ENCODE measurements at regions of chr6 and their contacts with region 1.

Region 1: GRCh38 chr6:26045065-26045927 is 41.9 kb upstream of the HFE start:
- DNase-seq: peak; percentile 92 to 96 (median 96)
- H3K4me3 ChIP-seq: peak overlapping the region; percentile 33 to 94 (median 79)
- H3K27ac ChIP-seq: peak overlapping the region; percentile 37 to 65
- H3K4me1 ChIP-seq: peaks cover 4 to 41% (median 27%) of the 10 kb centered on the region in 4 experiments
- H3K27me3 ChIP-seq: no peaks in the 10 kb centered on the region

Region 2: DNA sequence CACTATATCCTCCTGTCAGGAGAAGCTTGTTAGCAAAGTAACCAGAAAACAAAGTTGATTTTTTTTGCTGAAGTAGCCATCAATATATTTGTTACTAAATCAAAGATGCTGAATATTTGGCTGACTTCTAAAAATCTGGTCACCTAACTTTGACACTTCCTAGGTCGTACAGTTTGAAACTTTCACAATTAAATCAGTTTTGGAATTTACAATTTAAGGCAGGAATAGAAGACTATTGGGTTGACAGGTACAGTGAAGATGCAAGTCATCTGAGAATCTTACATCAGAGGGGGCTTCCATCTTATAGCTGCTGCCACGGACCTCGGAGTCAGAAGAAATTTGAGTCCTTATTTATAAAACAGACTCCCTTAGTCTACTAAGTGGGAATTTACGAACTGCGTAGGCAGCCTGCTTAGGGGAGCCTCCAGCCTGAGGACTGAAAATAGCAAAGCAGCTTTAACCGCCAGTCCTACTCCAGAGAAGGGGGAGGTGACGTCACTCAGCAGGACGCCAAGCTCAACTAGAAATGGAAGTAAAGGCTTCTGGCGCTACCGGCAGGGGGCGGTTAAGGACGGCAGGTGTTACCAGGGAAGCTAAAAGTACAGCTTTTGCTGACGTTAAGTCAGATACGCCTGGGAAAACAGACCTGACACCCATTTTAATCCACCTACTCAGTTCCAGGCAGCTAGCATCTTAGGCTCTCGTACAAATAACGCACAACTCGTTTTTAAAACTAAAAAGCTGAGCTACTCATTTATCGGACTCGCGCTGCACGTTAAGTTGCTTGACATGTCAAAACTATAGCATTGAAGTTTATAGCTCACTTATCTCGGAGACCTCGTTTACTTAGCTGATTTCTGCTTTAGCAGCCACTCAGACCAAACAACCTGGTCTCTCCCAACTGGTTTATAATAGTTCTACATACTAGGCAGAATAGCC is 19.1 kb before region 1 on chr6:
- CTCF ChIA-PET with region 1: interaction called, 53 read pairs
- POLR2A ChIA-PET with region 1: interaction called, 78 read pairs
- DNase-seq: peak; percentile 96 to 98 (median 97)
- H3K4me3 ChIP-seq: peak overlapping the region in 6 of 7 experiments; percentile 70 to 91 (median 85)
- H3K27ac ChIP-seq: peak overlapping the region; percentile 88 to 96
- H3K4me1 ChIP-seq: peaks cover 25 to 71% (median 41%) of the 10 kb centered on the region in 4 experiments
- H3K27me3 ChIP-seq: no peaks in the 10 kb centered on the region

Region 3: GRCh38 chr6:26031595-26032339 is 13.5 kb before region 1 on chr6:
- CTCF ChIA-PET with region 1: interaction called, 53 read pairs
- POLR2A ChIA-PET with region 1: interaction called, 78 read pairs
- DNase-seq: peak; percentile 95 to 97 (median 97)
- H3K4me3 ChIP-seq: peak overlapping the region; percentile 41 to 87 (median 80)
- H3K27ac ChIP-seq: peak overlapping the region; percentile 17 to 83
- H3K4me1 ChIP-seq: peaks cover 24 to 81% (median 42%) of the 10 kb centered on the region in 4 experiments
- H3K27me3 ChIP-seq: no peaks in the 10 kb centered on the region

Region 4: GRCh38 chr6:26065952-26066380 is 20.7 kb after region 1 on chr6:
- CTCF ChIA-PET with region 1: interaction called, 44 read pairs
- POLR2A ChIA-PET with region 1: no interaction called
- DNase-seq: peak; percentile 84 to 95 (median 93)
- H3K4me3 ChIP-seq: peak overlapping the region in 1 of 7 experiments; percentile 28
- H3K27ac ChIP-seq: no peak overlapping the region
- H3K4me1 ChIP-seq: peaks cover 0 to 7% (median 3%) of the 10 kb centered on the region in 4 experiments
- H3K27me3 ChIP-seq: no peaks in the 10 kb centered on the region

Region 5: GRCh38 chr6:26122793-26123674 is 77.7 kb after region 1 on chr6:
- CTCF ChIA-PET with region 1: interaction called, 10 read pairs
- POLR2A ChIA-PET with region 1: interaction called, 31 read pairs
- DNase-seq: peak; percentile 97 to 99 (median 98)
- H3K4me3 ChIP-seq: peak overlapping the region; percentile 56 to 100 (median 96)
- H3K27ac ChIP-seq: peak overlapping the region; percentile 84 to 96
- H3K4me1 ChIP-seq: peaks cover 11 to 38% (median 26%) of the 10 kb centered on the region in 4 experiments
- H3K27me3 ChIP-seq: no peaks in the 10 kb centered on the region

Region 6: DNA sequence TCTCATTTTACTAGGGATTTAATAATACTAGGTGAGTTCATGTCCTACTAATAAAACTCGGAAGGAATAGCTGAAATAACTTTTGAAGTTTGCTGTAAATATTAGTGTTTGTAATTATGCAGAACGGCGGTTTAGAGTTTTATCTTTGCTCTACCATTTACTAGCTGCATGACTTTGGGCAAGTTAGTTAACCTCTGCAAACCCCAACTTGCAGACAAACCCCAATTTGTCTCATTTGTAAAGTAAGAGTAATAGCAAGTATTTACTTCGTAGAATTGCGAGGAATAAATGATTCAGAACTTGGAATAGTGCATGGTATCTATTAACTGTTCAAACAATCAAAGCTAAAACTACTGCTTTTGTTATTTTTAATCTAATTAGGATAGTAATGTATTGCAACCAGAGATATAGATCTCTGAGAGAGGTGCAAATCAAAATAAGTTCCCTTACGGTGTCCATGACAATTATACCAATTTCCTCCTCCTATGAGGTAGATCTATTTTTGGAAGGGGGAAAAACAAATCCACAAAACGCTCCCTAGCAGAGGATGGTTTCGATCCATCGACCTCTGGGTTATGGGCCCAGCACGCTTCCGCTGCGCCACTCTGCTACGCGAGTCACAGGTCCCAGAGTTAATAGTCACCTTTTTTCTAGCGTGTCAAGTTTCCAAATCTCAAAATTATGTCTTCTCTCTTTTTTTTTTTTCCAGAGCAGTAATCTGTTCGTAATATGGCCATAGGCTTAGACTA is 284.6 kb after region 1 on chr6:
- CTCF ChIA-PET with region 1: no interaction called
- POLR2A ChIA-PET with region 1: no interaction called
- DNase-seq: peak; percentile 53 to 70 (median 66)
- H3K4me3 ChIP-seq: peak overlapping the region in 3 of 7 experiments; percentile 55 to 73 (median 70)
- H3K27ac ChIP-seq: peak overlapping the region in 1 of 2 experiments; percentile 76
- H3K4me1 ChIP-seq: peaks cover 7 to 40% (median 29%) of the 10 kb centered on the region in 4 experiments
- H3K27me3 ChIP-seq: peaks cover 17 to 65% (median 47%) of the 10 kb centered on the region in 5 experiments

Region 7: DNA sequence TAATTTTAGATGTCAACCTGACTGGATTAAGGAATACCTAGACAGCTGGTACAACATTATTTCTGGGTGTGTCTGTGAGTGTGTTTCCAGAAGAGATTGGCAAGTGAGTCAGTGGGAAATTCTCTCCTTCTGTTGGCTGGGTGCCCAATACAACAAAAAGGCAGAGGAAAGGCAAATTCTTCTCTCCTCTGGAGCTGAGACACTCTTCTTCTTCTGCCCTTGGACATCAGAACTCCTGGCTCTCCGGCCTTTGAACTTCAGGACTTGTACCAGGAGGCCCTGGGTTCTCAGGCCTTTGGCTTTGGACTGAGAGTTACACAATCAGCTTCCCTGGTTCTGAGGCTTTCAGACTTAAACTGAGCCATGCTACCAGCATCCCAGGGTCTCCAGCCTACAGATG is 349.0 kb after region 1 on chr6:
- CTCF ChIA-PET with region 1: no interaction called
- POLR2A ChIA-PET with region 1: no interaction called
- DNase-seq: no peak
- H3K4me3 ChIP-seq: no peak overlapping the region
- H3K27ac ChIP-seq: no peak overlapping the region
- H3K4me1 ChIP-seq: no peaks in the 10 kb centered on the region
- H3K27me3 ChIP-seq: no peaks in the 10 kb centered on the region

Measured in common myeloid progenitor, CD34-positive (primary cell).